Panc1 (cell line): ENCODE measurements at regions of chr19 and their contacts with region 1.

Region 1: DNA sequence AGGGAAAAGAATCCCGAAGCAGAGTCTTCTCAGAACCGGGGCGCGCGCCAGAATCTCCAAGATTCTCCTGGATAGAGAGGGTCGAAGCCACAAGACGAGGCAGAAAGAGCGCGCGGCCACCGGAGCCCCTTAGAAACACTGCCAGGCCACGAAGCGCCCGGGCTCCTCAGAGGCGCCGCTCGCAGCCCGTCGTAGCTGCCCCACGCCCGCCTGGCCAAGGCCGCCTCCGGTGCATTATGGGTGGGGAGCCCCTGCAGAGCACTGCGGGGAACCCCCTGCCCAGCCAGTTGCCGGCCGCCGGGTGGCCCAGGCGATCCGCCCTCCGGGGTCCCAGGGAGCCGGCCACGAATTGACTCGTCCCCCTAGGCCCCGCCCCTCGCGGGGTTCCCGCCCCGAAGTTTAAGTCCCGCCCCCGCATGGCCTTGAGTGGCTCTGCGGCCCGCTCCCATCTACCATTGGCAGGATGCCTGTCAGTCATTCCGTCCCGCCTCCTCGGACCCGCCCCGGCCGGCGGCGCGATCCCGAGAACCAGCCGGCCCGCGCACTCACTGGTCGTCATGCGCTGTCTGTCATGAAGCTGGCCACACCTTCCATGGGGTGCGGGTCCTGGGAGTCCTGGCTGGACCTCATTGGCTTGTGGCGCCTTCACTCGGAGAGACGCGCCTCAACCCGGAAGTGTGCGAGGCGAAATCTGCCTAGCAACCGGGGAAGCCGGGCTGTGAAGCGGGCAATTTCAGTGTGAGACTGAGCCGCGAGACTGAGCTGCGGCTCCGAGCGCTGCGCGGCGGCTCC is 20.2 kb upstream of the GATAD2A start:
- DNase-seq: peak; percentile 94
- ATAC-seq: peak; percentile 98
- H3K4me3 ChIP-seq: peak overlapping the region; percentile 68 to 91
- H3K27ac ChIP-seq: peak overlapping the region; percentile 89
- H3K4me1 ChIP-seq: peaks cover 5% of the 10 kb centered on the region
- H3K27me3 ChIP-seq: no peaks in the 10 kb centered on the region
- CTCF ChIP-seq: no peak

Region 2: DNA sequence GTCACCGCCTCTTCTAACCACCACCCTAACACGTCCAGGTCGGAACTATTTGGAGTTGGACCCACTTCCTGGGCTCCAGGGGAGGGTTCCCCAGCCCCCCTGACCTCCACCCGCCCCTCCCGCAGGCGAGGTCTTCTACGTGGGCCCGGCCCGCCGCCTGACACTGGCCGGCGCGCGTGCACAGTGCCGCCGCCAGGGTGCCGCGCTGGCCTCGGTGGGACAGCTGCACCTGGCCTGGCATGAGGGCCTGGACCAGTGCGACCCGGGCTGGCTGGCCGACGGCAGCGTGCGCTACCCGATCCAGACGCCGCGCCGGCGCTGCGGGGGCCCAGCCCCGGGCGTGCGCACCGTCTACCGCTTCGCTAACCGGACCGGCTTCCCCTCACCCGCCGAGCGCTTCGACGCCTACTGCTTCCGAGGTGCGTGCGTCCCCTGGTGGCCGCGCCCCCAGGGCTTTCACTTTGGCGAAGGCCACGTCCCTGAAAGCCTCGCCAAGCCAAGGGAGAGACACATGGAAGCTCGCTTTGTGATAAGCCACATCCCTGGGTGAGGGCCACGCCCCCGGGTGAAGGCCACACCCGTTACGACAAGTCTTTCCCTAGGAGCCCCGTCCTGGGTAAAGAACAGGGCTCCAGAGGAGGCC is 160.3 kb before region 1 on chr19:
- CTCF ChIA-PET with region 1: no interaction called
- POLR2A ChIA-PET with region 1: no interaction called
- in situ Hi-C with region 1: no loop called
- intact Hi-C with region 1: no loop called
- DNase-seq: no peak
- ATAC-seq: peak; percentile 92
- H3K4me3 ChIP-seq: peak overlapping the region; percentile 31 to 47
- H3K27ac ChIP-seq: no peak overlapping the region
- H3K4me1 ChIP-seq: peaks cover 4% of the 10 kb centered on the region; the same call in 1 of the 2 replicates
- H3K27me3 ChIP-seq: no peaks in the 10 kb centered on the region
- CTCF ChIP-seq: peak; percentile 89

Region 3: DNA sequence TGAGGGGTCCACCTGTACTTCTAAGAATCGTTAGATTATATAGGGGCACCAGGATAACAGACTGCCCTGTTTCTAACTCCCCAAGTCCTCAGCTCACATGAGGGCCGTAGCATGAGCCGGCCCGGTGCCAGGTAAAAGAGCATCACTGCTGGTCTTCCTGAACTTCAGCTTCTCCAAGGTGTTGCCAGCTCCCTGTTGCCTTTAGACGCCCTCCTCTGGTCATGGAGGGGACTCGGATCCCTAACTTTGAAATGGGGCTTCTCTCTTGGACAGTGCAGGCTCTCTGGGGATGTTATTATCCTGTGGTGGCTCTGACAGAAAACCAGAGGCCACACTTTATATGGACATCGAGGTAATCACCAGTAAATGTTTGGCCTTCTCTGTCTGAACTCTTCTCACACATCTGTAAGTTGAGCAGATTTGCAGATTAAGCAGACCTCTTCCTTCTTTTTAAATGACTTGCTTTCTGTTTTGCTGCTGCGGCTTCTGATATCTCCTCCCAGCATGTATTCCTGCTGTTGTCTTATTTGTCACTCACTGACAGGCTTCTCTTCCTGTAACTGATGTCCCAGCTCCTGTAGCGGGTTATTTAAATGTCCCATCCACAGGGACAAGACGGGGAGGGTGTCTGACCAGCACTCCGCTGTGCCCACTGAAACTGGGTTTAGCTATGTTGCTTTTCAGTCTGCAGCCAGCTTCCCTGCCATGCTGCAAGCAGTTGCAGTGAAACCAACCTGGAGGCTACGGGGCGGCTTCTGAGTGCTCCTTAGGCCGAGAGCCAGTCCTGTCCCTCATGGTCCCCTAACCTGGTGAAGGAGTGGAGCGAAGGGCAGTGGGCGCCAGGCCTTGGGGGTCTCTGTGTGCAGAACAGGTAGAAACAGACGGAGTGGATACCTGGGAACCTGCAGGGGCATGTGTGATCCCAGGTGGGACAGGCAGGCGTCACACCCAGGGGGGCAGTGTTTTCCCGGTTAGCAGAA is 90.8 kb after region 1 on chr19:
- CTCF ChIA-PET with region 1: no interaction called
- POLR2A ChIA-PET with region 1: interaction called, 12 read pairs
- in situ Hi-C with region 1: no loop called
- intact Hi-C with region 1: no loop called
- DNase-seq: no peak
- ATAC-seq: peak; percentile 75
- H3K4me3 ChIP-seq: no peak overlapping the region
- H3K27ac ChIP-seq: no peak overlapping the region
- H3K4me1 ChIP-seq: no peaks in the 10 kb centered on the region; the same call in 1 of the 2 replicates
- H3K27me3 ChIP-seq: no peaks in the 10 kb centered on the region
- CTCF ChIP-seq: no peak

Region 4: GRCh38 chr19:20321139-20321763 is 935.9 kb after region 1 on chr19:
- CTCF ChIA-PET with region 1: no interaction called
- POLR2A ChIA-PET with region 1: no interaction called
- in situ Hi-C with region 1: no loop called
- intact Hi-C with region 1: no loop called
- DNase-seq: no peak
- ATAC-seq: no peak
- H3K4me3 ChIP-seq: no peak overlapping the region
- H3K27ac ChIP-seq: no peak overlapping the region
- H3K4me1 ChIP-seq: no peaks in the 10 kb centered on the region
- H3K27me3 ChIP-seq: no peaks in the 10 kb centered on the region
- CTCF ChIP-seq: no peak